Left lung (tissue), 14 donors: ENCODE measurements at regions of chr11 and their contacts with region 1.

Region 1: GRCh38 chr11:129364143-129364654 is 11.4 kb upstream of the BARX2 start:
- DNase-seq: peak; percentile 61 to 89 (median 82)
- ATAC-seq: peak; percentile 100
- H3K4me3 ChIP-seq: no peak overlapping the region
- H3K27ac ChIP-seq: no peak overlapping the region
- H3K4me1 ChIP-seq: no peaks in the 10 kb centered on the region
- H3K27me3 ChIP-seq: peaks cover 47 to 77% of the 10 kb centered on the region in 2 donors
- CTCF ChIP-seq: peak; percentile 90 to 98

Region 2: GRCh38 chr11:129237880-129238638 is 126.1 kb before region 1 on chr11:
- intact Hi-C with region 1: no loop called
- DNase-seq: no peak
- ATAC-seq: no peak
- H3K4me3 ChIP-seq: no peak overlapping the region
- H3K27ac ChIP-seq: no peak overlapping the region
- H3K4me1 ChIP-seq: no peaks in the 10 kb centered on the region
- H3K27me3 ChIP-seq: no peaks in the 10 kb centered on the region
- CTCF ChIP-seq: no peak

Region 3: GRCh38 chr11:129279326-129280026 is 84.7 kb before region 1 on chr11:
- intact Hi-C with region 1: no loop called
- DNase-seq: peak; percentile 81 to 94 (median 85)
- ATAC-seq: peak; percentile 90
- H3K4me3 ChIP-seq: peak overlapping the region; percentile 43 to 51
- H3K27ac ChIP-seq: peak overlapping the region in 1 of 2 donors; percentile 33
- H3K4me1 ChIP-seq: peaks cover 9 to 43% of the 10 kb centered on the region in 2 donors
- H3K27me3 ChIP-seq: peaks cover 0 to 18% of the 10 kb centered on the region in 2 donors
- CTCF ChIP-seq: no peak

Region 4: DNA sequence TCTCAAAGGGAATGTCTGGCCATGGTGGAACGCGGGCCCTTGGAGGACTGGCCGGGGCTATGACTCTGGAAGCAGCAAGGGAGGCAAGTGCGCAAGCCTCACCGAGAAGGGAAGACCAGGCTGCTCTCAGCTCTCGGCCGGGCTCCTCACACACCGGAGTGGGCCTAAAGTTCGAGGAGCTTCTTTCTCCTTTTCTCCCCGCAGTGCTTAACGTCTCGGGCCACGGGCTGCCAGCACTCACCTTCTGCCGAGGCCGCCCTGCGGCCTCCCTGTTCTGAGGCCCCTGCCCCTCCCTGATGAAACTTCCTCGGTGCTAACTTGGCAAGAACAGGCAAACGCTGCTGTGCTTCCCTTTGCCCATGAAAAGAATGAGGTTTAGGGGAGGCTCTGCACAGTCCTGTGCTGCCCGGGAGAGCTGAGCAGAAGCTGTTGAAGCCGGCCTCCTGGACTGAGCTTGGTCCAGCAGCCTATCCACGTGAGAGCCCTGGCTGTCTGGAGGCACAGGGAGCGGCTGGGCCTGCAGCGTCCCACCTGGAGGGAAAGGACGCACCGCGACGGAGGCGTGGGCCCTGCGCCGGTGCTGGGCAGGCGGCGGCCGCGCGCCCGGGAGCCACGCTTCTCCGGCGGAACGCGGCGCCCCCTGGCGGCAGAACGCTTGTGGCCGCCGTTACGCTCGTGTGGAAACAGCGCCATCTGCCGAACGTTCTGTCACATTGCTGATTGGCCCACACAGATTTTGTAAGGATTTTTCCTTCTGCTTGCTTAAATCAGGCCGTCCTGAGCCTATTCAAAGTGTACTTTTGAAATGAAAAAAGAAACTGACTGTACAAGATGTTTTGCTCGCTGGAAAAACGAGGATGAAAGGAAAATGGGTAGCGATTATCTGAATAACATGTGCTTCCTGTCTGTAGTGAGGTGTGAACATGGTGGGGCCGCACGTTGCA is 386.4 kb after region 1 on chr11:
- intact Hi-C with region 1: loop called in 1 of 2 experiments (anchors 10 kb)
- DNase-seq: peak; percentile 77 to 93 (median 80)
- ATAC-seq: peak; percentile 100
- H3K4me3 ChIP-seq: peak overlapping the region in 1 of 2 donors; percentile 25
- H3K27ac ChIP-seq: no peak overlapping the region
- H3K4me1 ChIP-seq: peaks cover 0 to 9% of the 10 kb centered on the region in 2 donors
- H3K27me3 ChIP-seq: peaks cover 0 to 39% of the 10 kb centered on the region in 2 donors
- CTCF ChIP-seq: peak; percentile 98 to 100